ENCODE measurements at regions of chr6 and their contacts with region 1.

Region 1: DNA sequence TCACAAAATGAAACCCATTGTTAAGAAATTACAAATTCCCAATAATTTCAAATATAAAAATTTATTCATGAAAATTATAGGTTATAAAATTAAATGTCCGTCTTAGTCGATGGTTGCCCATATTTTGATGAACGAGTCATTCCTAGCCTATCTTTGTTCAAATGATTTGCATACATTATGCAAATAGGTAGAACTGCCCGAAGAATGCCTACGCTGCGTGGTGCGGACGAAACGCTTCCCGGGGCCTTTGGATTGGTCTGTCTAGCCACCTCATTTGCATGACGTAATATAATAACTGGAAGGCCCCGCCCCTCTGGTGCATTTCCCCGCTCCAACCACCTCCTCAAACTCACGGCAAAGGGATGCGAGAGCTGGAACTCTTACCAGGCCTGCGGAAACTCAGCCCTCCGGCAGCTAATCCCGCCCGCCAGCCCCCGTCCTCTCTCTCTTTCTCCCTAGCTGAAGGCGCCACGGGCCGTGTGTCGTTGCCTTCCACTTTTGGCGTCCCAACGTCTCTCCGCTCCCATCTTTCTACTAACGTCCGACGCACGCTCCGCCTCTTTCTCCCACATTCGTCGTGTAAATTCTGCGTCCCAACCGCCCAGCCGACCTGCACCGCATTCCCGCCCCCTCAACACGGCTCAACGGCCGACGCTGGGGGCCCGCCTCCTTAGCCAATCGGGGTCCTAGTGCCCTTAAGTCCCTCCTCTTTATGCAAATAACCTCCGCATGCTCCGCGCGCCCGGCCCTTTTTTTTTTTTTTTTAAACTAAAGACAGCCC is 520 bp upstream of the PRRC2A start:
- DNase-seq: peak; percentile 98
- ATAC-seq: peak; percentile 82
- H3K4me3 Mint-ChIP-seq: peak overlapping the region; percentile 95
- H3K27ac Mint-ChIP-seq: peak overlapping the region; percentile 97
- H3K4me1 Mint-ChIP-seq: peaks cover 52% of the 10 kb centered on the region
- H3K27me3 Mint-ChIP-seq: no peaks in the 10 kb centered on the region

Region 2: GRCh38 chr6:31383149-31383548 is 236.8 kb before region 1 on chr6:
- CTCF ChIA-PET with region 1: no interaction called
- POLR2A ChIA-PET with region 1: no interaction called
- intact Hi-C with region 1: no loop called
- DNase-seq: peak; percentile 42
- ATAC-seq: peak; percentile 92
- H3K4me3 Mint-ChIP-seq: no peak overlapping the region
- H3K27ac Mint-ChIP-seq: no peak overlapping the region
- H3K4me1 Mint-ChIP-seq: peaks cover 3% of the 10 kb centered on the region
- H3K27me3 Mint-ChIP-seq: peaks cover 14% of the 10 kb centered on the region

Region 3: DNA sequence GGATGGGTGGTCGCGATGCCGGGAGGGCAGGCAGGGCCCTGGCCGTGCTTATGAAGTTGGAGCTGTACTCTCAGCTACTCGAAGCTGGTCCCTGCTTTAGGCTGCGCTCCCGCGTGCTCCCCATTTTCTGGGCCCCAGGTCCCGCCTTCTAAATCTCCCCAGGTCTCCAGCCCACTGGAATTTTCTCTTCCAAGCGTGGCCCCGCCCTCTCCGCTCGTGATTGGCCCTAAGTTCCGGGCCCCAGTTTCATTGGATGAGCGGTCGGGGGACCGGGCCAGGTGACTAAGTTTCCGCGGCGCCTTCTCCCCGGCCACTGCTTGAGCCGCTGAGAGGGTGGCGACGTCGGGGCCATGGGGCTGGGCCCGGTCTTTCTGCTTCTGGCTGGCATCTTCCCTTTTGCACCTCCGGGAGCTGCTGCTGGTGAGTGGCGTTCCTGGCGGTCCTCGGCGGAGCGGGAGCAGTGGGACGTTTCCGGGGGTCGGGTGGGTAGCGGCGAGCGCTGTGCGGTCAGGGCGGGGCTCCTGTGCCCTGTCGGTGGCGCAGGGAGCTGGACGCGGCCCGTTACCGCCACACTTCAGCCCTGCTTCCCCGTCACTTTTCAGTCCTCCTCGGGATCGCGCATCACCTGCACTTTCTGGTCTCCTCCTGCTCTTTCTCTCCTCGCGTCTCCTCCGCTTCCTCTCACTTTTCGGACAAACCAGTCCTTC is 216.6 kb before region 1 on chr6 and contains the start of gene MICA:
- CTCF ChIA-PET with region 1: no interaction called
- POLR2A ChIA-PET with region 1: no interaction called
- intact Hi-C with region 1: no loop called
- DNase-seq: peak; percentile 83
- ATAC-seq: peak; percentile 68
- H3K4me3 Mint-ChIP-seq: peak within 1 kb of the TSS; percentile 71
- H3K27ac Mint-ChIP-seq: peak within 1 kb of the TSS; percentile 71
- H3K4me1 Mint-ChIP-seq: peaks cover 62% of the 10 kb centered on the region
- H3K27me3 Mint-ChIP-seq: no peaks in the 10 kb centered on the region
- total RNA-seq, gene MICA: 6.3 to 7.1 TPM

Region 4: DNA sequence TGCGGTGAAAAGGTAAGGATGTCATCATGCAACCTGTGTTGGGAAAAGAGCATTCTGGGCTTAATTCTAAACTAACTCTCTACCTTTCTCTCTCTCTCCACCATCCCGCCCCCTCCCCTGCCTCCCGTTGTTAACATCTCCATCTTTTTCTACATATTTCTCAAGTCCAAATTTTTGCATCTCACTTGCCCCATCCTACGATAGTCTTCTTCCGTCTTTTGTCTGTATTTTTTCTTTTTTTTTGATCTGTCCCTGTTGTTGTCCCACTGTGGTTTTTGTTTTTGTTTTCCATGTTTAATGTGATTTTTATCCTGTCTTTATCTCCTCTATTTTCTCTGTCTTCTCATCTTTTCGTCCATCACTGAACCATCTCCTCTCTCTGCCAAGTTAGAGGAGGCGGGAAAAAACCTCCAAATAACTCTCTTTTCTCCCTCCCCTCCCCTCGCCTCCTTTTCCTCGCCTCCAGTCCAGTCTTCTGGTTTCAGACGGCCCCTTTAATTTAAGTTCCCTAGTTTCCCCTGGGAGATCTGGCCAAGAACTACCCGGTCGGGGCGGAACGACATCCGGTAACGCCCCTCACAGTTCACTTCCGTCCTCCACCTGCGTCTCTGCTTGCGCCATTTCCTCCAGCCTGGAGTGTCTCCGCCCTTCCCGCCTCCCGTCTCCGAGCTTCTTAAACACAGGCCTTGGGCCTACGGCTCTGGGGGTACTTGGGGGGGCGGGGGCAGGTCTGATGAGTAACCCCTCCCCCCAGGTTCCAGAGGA is 72.9 kb before region 1 on chr6 and contains the start of gene NFKBIL1:
- CTCF ChIA-PET with region 1: interaction called, 4 read pairs
- POLR2A ChIA-PET with region 1: interaction called, 6 read pairs
- intact Hi-C with region 1: loop called (anchors 1 to 2 kb)
- DNase-seq: peak; percentile 95
- ATAC-seq: peak; percentile 77
- H3K4me3 Mint-ChIP-seq: peak within 1 kb of the TSS; percentile 89
- H3K27ac Mint-ChIP-seq: peak within 1 kb of the TSS; percentile 97
- H3K4me1 Mint-ChIP-seq: peaks cover 51% of the 10 kb centered on the region
- H3K27me3 Mint-ChIP-seq: no peaks in the 10 kb centered on the region
- total RNA-seq, gene NFKBIL1: 18.1 to 19.0 TPM

Region 5: GRCh38 chr6:31652925-31653718 is 33.1 kb after region 1 on chr6:
- CTCF ChIA-PET with region 1: no interaction called
- POLR2A ChIA-PET with region 1: interaction called, 4 read pairs
- intact Hi-C with region 1: loop called (anchors 1 kb)
- DNase-seq: peak; percentile 91
- ATAC-seq: peak; percentile 71
- H3K4me3 Mint-ChIP-seq: peak overlapping the region; percentile 88
- H3K27ac Mint-ChIP-seq: peak overlapping the region; percentile 96
- H3K4me1 Mint-ChIP-seq: peaks cover 38% of the 10 kb centered on the region
- H3K27me3 Mint-ChIP-seq: no peaks in the 10 kb centered on the region

Region 6: GRCh38 chr6:31739639-31740396 is 119.8 kb after region 1 on chr6 and contains the start of gene MSH5:
- CTCF ChIA-PET with region 1: no interaction called
- POLR2A ChIA-PET with region 1: interaction called, 3 read pairs
- intact Hi-C with region 1: loop called (anchors 1 to 2 kb)
- DNase-seq: peak; percentile 98
- ATAC-seq: peak; percentile 87
- H3K4me3 Mint-ChIP-seq: peak within 1 kb of the TSS; percentile 96
- H3K27ac Mint-ChIP-seq: peak within 1 kb of the TSS; percentile 86
- H3K4me1 Mint-ChIP-seq: peaks cover 46% of the 10 kb centered on the region
- H3K27me3 Mint-ChIP-seq: no peaks in the 10 kb centered on the region
- total RNA-seq, gene MSH5: 92.1 to 126 TPM

Region 7: GRCh38 chr6:31901953-31902643 is 282.1 kb after region 1 on chr6 and contains the start of gene ZBTB12:
- CTCF ChIA-PET with region 1: no interaction called
- POLR2A ChIA-PET with region 1: no interaction called
- intact Hi-C with region 1: loop called in 1 of 2 experiments (anchors 1 kb)
- DNase-seq: peak; percentile 92
- ATAC-seq: peak; percentile 63
- H3K4me3 Mint-ChIP-seq: peak within 1 kb of the TSS; percentile 69
- H3K27ac Mint-ChIP-seq: peak within 1 kb of the TSS; percentile 78
- H3K4me1 Mint-ChIP-seq: peaks cover 25% of the 10 kb centered on the region
- H3K27me3 Mint-ChIP-seq: no peaks in the 10 kb centered on the region
- total RNA-seq, gene ZBTB12: 1.9 to 2.4 TPM

Region 8: DNA sequence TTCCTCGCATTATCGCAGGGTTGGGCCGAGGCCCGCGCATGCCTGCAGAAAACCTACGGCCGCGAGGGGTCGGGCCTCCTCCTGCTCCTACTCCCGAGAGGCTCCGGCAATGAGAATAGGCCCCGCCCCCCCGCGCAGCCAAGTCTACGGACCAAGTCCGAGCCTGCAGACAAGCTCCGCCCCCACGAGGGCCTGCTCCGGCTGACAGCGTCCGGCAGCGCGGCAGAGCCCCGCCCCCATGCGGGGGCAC is 575.6 kb after region 1 on chr6:
- CTCF ChIA-PET with region 1: no interaction called
- POLR2A ChIA-PET with region 1: no interaction called
- intact Hi-C with region 1: loop called in 1 of 2 experiments (anchors 1 kb)
- DNase-seq: peak; percentile 100
- ATAC-seq: peak; percentile 90
- H3K4me3 Mint-ChIP-seq: peak overlapping the region; percentile 94
- H3K27ac Mint-ChIP-seq: peak overlapping the region; percentile 90
- H3K4me1 Mint-ChIP-seq: peaks cover 32% of the 10 kb centered on the region
- H3K27me3 Mint-ChIP-seq: no peaks in the 10 kb centered on the region

Measured in activated CD4-positive, alpha-beta T cell treated with anti-CD3 and anti-CD28 coated beads for 36 hours (primary cell).